ENCODE measurements at regions of chr17 and their contacts with region 1.

Region 1: DNA sequence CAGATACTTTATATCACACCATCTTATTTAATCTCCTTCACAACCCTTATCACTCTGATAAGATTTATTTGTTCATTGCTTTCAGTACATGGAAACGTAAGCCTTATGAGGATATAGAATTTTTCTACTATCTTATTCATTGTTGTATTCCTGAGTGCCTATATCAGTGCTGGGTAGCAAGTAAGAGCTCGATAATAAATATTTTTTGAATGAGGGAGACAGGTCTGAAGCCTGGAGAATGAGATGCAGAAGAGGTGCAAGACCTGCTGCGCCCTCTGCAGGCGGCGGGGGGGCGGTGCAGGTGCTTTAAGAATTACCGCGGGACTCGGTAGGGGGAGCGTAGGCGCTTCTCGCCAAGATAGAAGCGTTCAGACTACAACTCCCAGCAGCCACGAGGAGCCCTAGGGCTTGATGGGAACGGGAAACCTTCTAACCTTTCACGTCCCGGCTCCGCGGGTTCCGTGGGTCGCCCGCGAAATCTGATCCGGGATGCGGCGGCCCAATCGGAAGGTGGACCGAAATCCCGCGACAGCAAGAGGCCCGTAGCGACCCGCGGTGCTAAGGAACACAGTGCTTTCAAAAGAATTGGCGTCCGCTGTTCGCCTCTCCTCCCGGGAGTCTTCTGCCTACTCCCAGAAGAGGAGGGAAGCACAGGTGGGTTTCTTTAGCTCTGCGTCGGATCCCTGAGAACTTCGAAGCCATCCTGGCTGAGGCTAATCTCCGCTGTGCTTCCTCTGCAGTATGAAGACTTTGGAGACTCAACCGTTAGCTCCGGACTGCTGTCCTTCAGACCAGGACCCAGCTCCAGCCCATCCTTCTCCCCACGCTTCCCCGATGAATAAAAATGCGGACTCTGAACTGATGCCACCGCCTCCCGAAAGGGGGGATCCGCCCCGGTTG is at the start of gene WRAP53:
- DNase-seq: peak; percentile 91
- ATAC-seq: peak; percentile 77
- H3K4me3 Mint-ChIP-seq: peak within 1 kb of the TSS; percentile 97
- H3K27ac Mint-ChIP-seq: peak within 1 kb of the TSS; percentile 99
- H3K4me1 Mint-ChIP-seq: peaks cover 49% of the 10 kb centered on the region
- H3K27me3 Mint-ChIP-seq: no peaks in the 10 kb centered on the region
- CTCF ChIP-seq: peak; percentile 94
- total RNA-seq, gene WRAP53: 17.1 and 17.6 TPM in 2 replicates

Region 2: DNA sequence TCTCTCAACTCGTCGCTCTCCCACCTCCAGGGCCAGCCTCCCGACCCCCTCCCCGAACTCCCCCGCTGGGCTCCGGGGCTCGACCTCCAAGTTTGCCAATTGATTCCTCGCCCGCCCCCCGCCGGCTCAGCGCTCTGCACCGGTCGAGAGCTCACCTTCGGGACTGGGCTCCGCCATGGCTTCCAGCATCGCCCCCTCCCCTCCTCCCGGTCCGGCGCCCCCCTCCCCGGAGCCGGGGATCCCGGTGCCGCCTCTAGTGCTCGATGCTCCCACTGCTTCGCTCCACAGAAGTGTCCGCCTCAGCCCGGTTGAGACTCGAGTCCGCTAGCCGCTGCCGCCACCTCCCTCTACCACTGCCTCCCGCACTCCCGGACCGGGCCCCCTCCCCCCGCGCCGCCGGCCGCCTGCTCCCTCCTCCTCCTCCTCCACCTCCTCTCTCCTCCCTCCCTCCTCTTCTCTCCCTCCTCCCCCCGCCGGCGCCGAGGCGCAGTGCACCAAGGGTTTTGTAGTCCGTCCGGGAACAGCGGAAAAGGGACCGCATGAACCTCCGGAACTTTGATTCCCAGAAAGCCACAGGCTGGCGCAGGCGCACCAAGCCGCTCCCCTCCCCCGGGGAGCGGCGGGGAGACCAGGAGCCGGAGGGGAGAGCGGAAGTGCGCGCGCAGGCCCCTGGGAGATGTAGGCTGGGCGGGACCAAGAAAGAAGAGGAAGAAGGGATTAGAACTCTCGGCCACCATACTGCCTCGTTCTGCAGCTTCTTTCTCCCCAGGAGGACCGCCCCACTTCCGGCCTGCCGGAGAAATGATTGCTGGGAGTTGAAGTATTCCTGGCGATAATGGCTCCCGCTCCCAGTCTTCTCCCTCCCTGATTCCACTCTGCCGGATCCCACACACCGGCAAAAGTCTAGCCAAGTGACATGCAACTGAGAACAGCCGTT is 448.8 kb before region 1 on chr17 and contains the start of gene PHF23:
- CTCF ChIA-PET with region 1: no interaction called
- POLR2A ChIA-PET with region 1: interaction called, 12 read pairs
- intact Hi-C with region 1: loop called (anchors 5 kb)
- DNase-seq: peak; percentile 93
- ATAC-seq: peak; percentile 64
- H3K4me3 Mint-ChIP-seq: peak within 1 kb of the TSS; percentile 99
- H3K27ac Mint-ChIP-seq: peak within 1 kb of the TSS; percentile 100
- H3K4me1 Mint-ChIP-seq: peaks cover 63% of the 10 kb centered on the region
- H3K27me3 Mint-ChIP-seq: no peaks in the 10 kb centered on the region
- CTCF ChIP-seq: no peak
- total RNA-seq, gene PHF23: 45.5 and 46.6 TPM in 2 replicates

Region 3: GRCh38 chr17:7351665-7352501 is 336.3 kb before region 1 on chr17 and contains the start of gene KCTD11:
- CTCF ChIA-PET with region 1: interaction called, 11 read pairs
- POLR2A ChIA-PET with region 1: interaction called, 8 read pairs
- intact Hi-C with region 1: loop called (anchors 1 kb)
- DNase-seq: peak; percentile 78
- ATAC-seq: peak; percentile 63
- H3K4me3 Mint-ChIP-seq: peak within 1 kb of the TSS; percentile 87
- H3K27ac Mint-ChIP-seq: peak within 1 kb of the TSS; percentile 87
- H3K4me1 Mint-ChIP-seq: peaks cover 42% of the 10 kb centered on the region
- H3K27me3 Mint-ChIP-seq: no peaks in the 10 kb centered on the region
- CTCF ChIP-seq: no peak
- total RNA-seq, gene KCTD11: 7.2 and 7.8 TPM in 2 replicates

Region 4: GRCh38 chr17:7548585-7549400 is 139.4 kb before region 1 on chr17 and contains the start of gene TNFSF12:
- CTCF ChIA-PET with region 1: no interaction called
- POLR2A ChIA-PET with region 1: interaction called, 19 read pairs
- intact Hi-C with region 1: no loop called
- DNase-seq: peak; percentile 55
- ATAC-seq: peak; percentile 58
- H3K4me3 Mint-ChIP-seq: peak within 1 kb of the TSS; percentile 82
- H3K27ac Mint-ChIP-seq: peak within 1 kb of the TSS; percentile 90
- H3K4me1 Mint-ChIP-seq: peaks cover 52% of the 10 kb centered on the region
- H3K27me3 Mint-ChIP-seq: no peaks in the 10 kb centered on the region
- CTCF ChIP-seq: no peak
- total RNA-seq, gene TNFSF12: 25.2 and 30.7 TPM in 2 replicates

Region 5: DNA sequence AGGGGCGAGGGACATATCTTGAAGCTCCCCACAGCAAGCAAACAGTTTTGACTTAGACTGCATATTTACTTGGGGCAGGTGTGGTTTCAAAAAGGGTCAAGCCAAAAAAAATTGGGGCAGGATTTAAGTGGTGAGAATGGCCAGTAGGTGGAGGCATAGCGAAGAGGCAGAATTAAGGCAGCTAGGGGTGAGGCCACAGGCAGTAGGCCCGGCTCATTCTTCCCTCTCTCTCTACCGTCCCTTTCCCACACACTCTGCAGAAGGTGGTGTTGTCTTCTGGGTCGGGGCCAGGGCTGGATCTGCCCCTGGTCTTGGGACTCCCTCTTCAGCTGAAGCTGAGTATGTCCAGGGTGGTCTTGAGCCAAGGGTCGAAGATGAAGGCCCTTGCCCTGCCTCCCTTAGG is 55.7 kb before region 1 on chr17:
- CTCF ChIA-PET with region 1: interaction called, 40 read pairs
- POLR2A ChIA-PET with region 1: interaction called, 87 read pairs
- intact Hi-C with region 1: loop called (anchors 1 kb)
- DNase-seq: no peak
- ATAC-seq: peak; percentile 22
- H3K4me3 Mint-ChIP-seq: no peak overlapping the region
- H3K27ac Mint-ChIP-seq: no peak overlapping the region
- H3K4me1 Mint-ChIP-seq: peaks cover 3% of the 10 kb centered on the region
- H3K27me3 Mint-ChIP-seq: no peaks in the 10 kb centered on the region
- CTCF ChIP-seq: no peak

Region 6: GRCh38 chr17:7794075-7794663 is 106.0 kb after region 1 on chr17:
- CTCF ChIA-PET with region 1: no interaction called
- POLR2A ChIA-PET with region 1: no interaction called
- intact Hi-C with region 1: no loop called
- DNase-seq: no peak
- ATAC-seq: no peak
- H3K4me3 Mint-ChIP-seq: no peak overlapping the region
- H3K27ac Mint-ChIP-seq: no peak overlapping the region
- H3K4me1 Mint-ChIP-seq: no peaks in the 10 kb centered on the region
- H3K27me3 Mint-ChIP-seq: peaks cover 10% of the 10 kb centered on the region
- CTCF ChIP-seq: no peak

Region 7: GRCh38 chr17:7887482-7888183 is 199.5 kb after region 1 on chr17:
- CTCF ChIA-PET with region 1: no interaction called
- POLR2A ChIA-PET with region 1: interaction called, 4 read pairs
- intact Hi-C with region 1: loop called (anchors 2 kb)
- DNase-seq: peak; percentile 60
- ATAC-seq: peak; percentile 76
- H3K4me3 Mint-ChIP-seq: no peak overlapping the region
- H3K27ac Mint-ChIP-seq: no peak overlapping the region
- H3K4me1 Mint-ChIP-seq: peaks cover 8% of the 10 kb centered on the region
- H3K27me3 Mint-ChIP-seq: no peaks in the 10 kb centered on the region
- CTCF ChIP-seq: no peak

Region 8: DNA sequence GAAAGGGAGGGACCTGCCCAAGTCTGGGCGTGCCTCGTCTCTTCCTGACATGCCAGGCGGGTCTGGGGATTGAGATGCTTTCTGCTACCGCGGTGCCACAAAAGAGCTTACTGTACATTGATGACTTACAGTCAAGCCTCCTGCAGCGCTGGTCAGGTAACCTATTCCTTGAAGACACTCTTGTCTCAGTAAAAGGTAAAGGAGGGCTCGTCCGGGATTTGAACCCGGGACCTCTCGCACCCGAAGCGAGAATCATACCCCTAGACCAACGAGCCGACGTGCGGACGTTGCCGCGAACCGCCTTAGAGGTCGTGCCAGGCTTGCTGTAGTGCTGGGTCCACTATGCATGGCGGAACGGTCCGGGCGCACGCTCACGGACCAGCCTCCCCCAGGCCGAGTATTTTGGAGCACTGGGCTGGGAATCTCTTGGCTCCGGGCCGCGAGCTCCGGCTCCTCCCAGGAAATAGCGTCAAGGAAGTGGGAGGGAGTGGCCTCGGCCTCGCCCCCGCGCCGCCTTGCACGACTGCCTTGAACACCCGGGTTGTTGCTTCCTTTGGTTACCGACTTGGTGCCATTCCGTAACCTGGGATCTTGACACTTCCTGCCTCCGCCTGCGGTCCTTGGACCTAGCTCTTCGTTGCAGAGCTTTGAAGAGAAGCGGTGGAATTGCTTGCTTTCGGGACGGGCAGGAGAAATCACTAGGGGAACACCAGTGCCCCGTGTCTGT is 534.6 kb after region 1 on chr17:
- CTCF ChIA-PET with region 1: no interaction called
- POLR2A ChIA-PET with region 1: interaction called, 15 read pairs
- intact Hi-C with region 1: loop called (anchors 10 kb)
- DNase-seq: peak; percentile 80
- ATAC-seq: peak; percentile 51
- H3K4me3 Mint-ChIP-seq: peak overlapping the region; percentile 97
- H3K27ac Mint-ChIP-seq: peak overlapping the region; percentile 97
- H3K4me1 Mint-ChIP-seq: peaks cover 68% of the 10 kb centered on the region
- H3K27me3 Mint-ChIP-seq: peaks cover 11% of the 10 kb centered on the region
- CTCF ChIP-seq: no peak

Measured in activated B cell treated with CpG ODN at 0.5 μM for 24 hours (primary cell).